T-cell (primary cell): ENCODE measurements at regions of chr9 and their contacts with region 1.

Region 1: DNA sequence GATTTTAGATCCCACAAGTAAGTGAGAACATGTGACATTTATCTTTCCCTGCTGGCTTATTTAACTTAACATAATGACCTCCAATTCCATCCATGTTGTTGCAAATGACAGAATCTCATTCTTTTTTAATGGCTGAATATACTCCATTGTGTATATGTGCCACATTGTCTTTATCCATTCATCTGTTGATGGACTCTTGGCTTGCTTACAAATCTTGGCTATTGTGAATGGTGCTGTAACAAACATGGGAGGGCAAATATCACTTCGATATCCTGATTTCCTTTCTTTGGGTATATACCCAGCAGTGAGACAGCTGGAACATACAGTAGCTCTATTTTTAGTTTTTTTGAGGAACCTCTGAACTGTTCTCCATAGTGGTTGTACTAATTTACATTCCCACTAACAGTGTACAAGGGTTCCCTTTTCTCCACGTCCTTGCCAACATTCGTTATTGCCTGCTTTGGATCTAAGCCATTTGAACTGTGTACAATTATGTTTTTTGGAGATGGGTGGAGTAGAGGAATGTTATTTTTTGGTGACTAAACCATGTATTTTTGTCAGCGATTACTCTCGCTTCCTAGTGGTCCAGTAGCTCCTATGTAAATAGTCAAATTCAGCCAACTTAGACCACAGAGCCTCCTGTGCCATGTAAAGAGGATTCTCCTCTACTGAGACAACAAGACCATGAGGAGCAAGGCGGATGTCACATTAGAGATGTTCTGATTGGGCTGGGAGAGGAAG is 60.6 kb downstream of the TNFSF15 start:
- DNase-seq: no peak
- ATAC-seq: no peak
- H3K4me3 ChIP-seq: no peak overlapping the region
- H3K4me3 Mint-ChIP-seq: no peak overlapping the region
- H3K27ac ChIP-seq: no peak overlapping the region
- H3K27ac Mint-ChIP-seq: peak overlapping the region in 1 of 2 donors; percentile 3
- H3K4me1 ChIP-seq: no peaks in the 10 kb centered on the region
- H3K4me1 Mint-ChIP-seq: peaks cover 0 to 3% (median 0%) of the 10 kb centered on the region in 3 donors
- H3K27me3 ChIP-seq: no peaks in the 10 kb centered on the region
- H3K27me3 Mint-ChIP-seq: no peaks in the 10 kb centered on the region

Region 2: DNA sequence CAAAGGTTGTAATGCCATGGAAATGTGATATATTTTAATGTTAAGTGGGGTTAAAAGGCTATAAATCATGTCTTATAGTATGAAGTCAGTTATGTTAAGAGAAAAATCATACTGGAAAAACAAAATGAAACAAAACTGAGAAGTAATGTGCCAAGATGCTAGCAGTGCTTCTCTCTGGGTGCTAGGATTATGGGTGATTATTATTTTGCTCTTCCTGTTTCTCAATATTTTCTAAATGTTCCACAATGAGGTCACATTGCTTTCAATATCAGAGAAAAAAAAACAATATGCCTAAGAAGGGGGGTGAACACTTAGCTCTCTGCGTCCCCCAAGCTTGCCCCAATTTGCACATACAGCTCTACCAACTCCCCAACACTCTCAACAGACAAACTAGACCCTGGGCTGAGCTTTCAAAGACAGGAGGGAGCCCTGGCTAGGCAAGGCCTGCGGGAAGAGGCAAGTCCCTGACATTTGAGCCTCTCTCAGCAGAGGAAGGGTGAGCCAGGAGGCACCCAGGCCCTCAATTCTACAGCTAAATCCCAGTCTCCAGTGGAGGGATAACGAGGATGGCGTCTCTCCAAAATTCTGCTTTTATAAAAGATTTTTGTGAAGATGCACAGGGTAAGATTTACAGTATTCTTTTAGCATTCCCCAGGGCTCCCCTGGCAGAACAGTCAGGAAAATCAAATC is 264.4 kb before region 1 on chr9:
- CTCF ChIA-PET with region 1: interaction called in 1 of 2 experiments, 12 read pairs
- POLR2A ChIA-PET with region 1: no interaction called
- DNase-seq: no peak
- ATAC-seq: no peak
- H3K4me3 ChIP-seq: no peak overlapping the region
- H3K4me3 Mint-ChIP-seq: no peak overlapping the region
- H3K27ac ChIP-seq: no peak overlapping the region
- H3K27ac Mint-ChIP-seq: no peak overlapping the region
- H3K4me1 ChIP-seq: peaks cover 0 to 23% of the 10 kb centered on the region in 2 experiments
- H3K4me1 Mint-ChIP-seq: peaks cover 0 to 31% (median 21%) of the 10 kb centered on the region in 3 donors
- H3K27me3 ChIP-seq: peaks cover 0 to 8% of the 10 kb centered on the region in 2 experiments
- H3K27me3 Mint-ChIP-seq: peaks cover 0 to 6% of the 10 kb centered on the region in 2 donors

Region 3: DNA sequence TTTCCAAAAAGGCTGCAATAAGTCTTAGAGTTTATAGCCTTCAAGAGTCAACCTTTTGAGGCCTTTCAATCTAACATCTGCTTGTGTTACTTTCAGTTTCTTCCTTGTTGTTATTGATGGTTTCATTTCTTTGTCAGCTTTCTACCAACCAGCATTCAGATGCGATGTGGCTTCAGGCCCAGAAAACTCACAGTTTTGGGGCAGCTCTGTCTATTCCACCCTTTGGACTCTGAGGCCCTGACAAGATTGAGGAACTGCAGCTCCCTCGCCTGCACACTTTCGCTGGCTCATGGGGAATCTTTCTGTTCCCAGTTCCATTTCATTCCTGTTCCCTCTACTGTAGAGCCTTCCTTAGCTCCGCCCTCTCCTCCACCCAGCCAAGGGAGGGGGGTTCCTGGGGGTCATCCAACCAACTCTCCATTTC is 226.7 kb before region 1 on chr9:
- CTCF ChIA-PET with region 1: no interaction called
- POLR2A ChIA-PET with region 1: no interaction called
- DNase-seq: no peak
- ATAC-seq: no peak
- H3K4me3 ChIP-seq: no peak overlapping the region
- H3K4me3 Mint-ChIP-seq: no peak overlapping the region
- H3K27ac ChIP-seq: no peak overlapping the region
- H3K27ac Mint-ChIP-seq: peak overlapping the region; percentile 34 to 40
- H3K4me1 ChIP-seq: peaks cover 3% of the 10 kb centered on the region in 2 experiments
- H3K4me1 Mint-ChIP-seq: peaks cover 6 to 13% (median 8%) of the 10 kb centered on the region in 3 donors
- H3K27me3 ChIP-seq: peaks cover 0 to 7% of the 10 kb centered on the region in 2 experiments
- H3K27me3 Mint-ChIP-seq: peaks cover 5 to 9% of the 10 kb centered on the region in 2 donors

Region 4: GRCh38 chr9:114769624-114770023 is 24.3 kb after region 1 on chr9:
- CTCF ChIA-PET with region 1: no interaction called
- POLR2A ChIA-PET with region 1: no interaction called
- DNase-seq: no peak
- ATAC-seq: no peak
- H3K4me3 ChIP-seq: no peak overlapping the region
- H3K4me3 Mint-ChIP-seq: no peak overlapping the region
- H3K27ac ChIP-seq: no peak overlapping the region
- H3K27ac Mint-ChIP-seq: no peak overlapping the region
- H3K4me1 ChIP-seq: no peaks in the 10 kb centered on the region
- H3K4me1 Mint-ChIP-seq: peaks cover 5 to 8% (median 6%) of the 10 kb centered on the region in 3 donors
- H3K27me3 ChIP-seq: no peaks in the 10 kb centered on the region
- H3K27me3 Mint-ChIP-seq: no peaks in the 10 kb centered on the region

Region 5: DNA sequence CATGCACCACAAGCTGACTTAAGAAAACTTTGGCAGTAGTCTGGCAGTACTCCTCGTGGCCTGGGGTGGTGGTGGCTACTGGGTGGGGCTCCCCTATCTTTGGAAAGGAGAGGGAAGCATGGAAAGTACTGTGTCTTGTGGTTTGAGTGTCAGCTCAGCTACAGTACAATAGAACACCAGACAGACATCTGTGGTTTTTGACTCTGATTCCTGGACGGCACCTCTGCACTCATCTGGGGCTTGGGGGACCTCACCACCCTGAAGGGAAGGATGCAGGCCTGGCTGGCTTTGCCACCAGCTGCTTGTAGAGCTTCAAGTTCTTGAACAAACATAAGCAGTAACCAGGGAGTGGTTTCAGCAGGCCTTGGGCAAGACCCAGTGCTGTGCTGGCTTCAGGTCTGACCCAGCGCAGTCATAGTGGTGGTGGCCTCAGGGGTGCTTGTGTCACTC is 144.5 kb after region 1 on chr9:
- CTCF ChIA-PET with region 1: no interaction called
- POLR2A ChIA-PET with region 1: no interaction called
- DNase-seq: no peak
- ATAC-seq: peak; percentile 31 to 54 (median 38)
- H3K4me3 ChIP-seq: no peak overlapping the region
- H3K4me3 Mint-ChIP-seq: peak overlapping the region in 1 of 3 donors; percentile 49
- H3K27ac ChIP-seq: no peak overlapping the region
- H3K27ac Mint-ChIP-seq: peak overlapping the region; percentile 59 to 82
- H3K4me1 ChIP-seq: peaks cover 14 to 31% of the 10 kb centered on the region in 2 experiments
- H3K4me1 Mint-ChIP-seq: peaks cover 37 to 59% (median 57%) of the 10 kb centered on the region in 3 donors
- H3K27me3 ChIP-seq: no peaks in the 10 kb centered on the region
- H3K27me3 Mint-ChIP-seq: no peaks in the 10 kb centered on the region